ENCODE measurements at regions of chr17 and their contacts with region 1.

Region 1: DNA sequence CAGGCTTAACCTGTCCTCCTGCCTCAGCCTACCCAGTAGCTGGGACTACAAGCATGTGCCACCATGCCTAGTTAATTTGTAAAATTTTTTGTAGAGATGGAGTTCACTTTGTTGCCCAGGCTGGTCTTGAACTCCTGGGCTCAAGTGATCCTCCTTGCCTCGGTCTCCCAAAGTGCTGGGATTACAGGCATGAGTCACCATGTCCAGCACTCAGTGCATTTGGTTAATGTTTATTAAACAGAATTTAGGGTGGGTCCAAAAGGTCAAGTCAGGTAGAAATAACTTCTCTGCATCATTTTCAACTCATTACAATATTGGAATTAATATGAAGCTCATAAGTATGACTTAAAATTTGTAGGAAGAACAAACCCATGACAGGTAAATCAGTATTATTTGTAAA is 55.7 kb downstream of the RHOT1 start:
- DNase-seq: no peak
- H3K4me3 ChIP-seq: no peak overlapping the region
- H3K27ac ChIP-seq: no peak overlapping the region
- H3K4me1 ChIP-seq: no peaks in the 10 kb centered on the region
- H3K27me3 ChIP-seq: no peaks in the 10 kb centered on the region
- CTCF ChIP-seq: no peak

Region 2: DNA sequence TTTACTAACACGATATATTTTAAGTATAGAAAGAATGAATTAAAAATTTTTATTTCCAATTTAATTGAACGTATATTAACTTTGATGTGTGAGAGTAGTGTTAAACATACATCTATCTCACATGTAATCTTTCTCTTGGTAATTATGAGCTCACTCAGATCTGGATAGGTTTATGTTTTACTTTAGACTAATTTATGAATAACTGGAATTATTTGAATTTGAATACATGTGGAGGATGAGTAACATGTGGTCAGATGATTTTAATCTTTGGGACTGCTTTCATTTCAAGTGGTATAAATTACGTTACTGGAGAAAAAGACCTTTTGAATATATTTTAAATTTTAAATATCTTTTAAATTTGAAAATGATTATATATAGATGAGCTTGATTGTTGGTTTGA is 17.7 kb after region 1 on chr17:
- CTCF ChIA-PET with region 1: no interaction called
- POLR2A ChIA-PET with region 1: no interaction called
- intact Hi-C with region 1: no loop called
- DNase-seq: no peak
- H3K4me3 ChIP-seq: no peak overlapping the region
- H3K27ac ChIP-seq: no peak overlapping the region
- H3K4me1 ChIP-seq: no peaks in the 10 kb centered on the region
- H3K27me3 ChIP-seq: no peaks in the 10 kb centered on the region
- CTCF ChIP-seq: no peak

Region 3: DNA sequence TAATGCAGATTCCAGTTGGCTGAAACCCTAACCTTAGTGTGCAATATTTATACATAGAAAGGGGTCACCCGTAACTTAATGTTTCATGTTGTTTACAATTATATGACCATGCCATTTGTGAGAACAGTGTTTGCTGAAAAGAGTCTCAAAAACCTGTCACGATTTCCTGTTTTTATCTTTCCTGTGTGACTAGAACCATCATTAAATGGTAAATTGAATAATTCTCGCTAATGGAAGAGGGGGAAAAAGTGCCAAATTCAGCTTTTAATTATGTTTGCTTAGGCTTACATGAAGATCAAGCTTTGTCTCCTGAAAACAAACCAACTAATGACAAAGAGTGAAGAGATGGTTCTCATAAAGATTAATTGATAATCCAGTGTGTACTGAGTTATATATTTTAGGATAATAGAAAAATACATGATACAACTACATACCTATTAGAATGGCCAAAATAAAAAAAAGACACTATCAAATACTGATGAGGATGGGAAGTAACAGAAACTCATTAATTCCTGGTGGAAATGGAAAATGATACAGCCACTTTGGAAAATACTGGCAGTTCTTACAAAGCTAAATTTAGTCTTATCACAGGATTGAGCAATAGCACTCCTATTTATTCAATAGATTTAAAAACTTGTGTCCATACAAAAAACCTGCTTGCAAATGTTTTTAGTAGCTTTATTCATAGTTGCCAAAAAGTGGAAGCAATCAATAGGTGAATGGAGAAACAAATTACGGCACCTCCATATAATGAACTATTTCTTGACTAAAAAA is 430.5 kb after region 1 on chr17:
- CTCF ChIA-PET with region 1: no interaction called
- POLR2A ChIA-PET with region 1: interaction called, 11 read pairs
- intact Hi-C with region 1: no loop called
- DNase-seq: no peak
- H3K4me3 ChIP-seq: no peak overlapping the region
- H3K27ac ChIP-seq: no peak overlapping the region
- H3K4me1 ChIP-seq: no peaks in the 10 kb centered on the region
- H3K27me3 ChIP-seq: no peaks in the 10 kb centered on the region
- CTCF ChIP-seq: no peak